Vagina (tissue), 2 donors: ENCODE measurements at regions of chr5 and their contacts with region 1.

Region 1: DNA sequence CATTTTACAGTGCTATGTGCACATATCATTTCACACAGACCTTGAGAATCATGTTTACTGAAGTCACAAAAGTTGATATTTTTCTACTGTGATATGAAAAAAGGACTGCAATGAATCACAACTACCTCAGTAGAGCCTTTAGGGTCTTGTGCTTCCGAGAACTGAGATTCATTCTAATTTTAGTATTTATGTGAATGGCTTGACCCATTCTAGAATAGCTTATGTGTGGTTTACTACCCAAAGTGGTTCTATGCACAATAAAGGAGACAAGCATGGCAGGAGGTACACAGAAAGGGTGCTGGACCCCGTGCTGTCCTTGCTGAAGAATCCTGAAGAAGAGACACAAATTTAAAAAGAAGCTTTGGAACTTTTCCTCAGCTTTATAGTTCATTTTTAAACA is 28.2 kb downstream of the MEF2C start:
- DNase-seq: no peak
- H3K4me3 ChIP-seq: no peak overlapping the region
- H3K27ac ChIP-seq: no peak overlapping the region
- H3K4me1 ChIP-seq: no peaks in the 10 kb centered on the region
- H3K27me3 ChIP-seq: no peaks in the 10 kb centered on the region
- CTCF ChIP-seq: no peak
- POLR2A ChIP-seq: no peak

Region 2: GRCh38 chr5:88438011-88438410 is 416.8 kb before region 1 on chr5:
- intact Hi-C with region 1: no loop called
- DNase-seq: no peak
- H3K4me3 ChIP-seq: no peak overlapping the region
- H3K27ac ChIP-seq: no peak overlapping the region
- H3K4me1 ChIP-seq: no peaks in the 10 kb centered on the region
- H3K27me3 ChIP-seq: no peaks in the 10 kb centered on the region
- CTCF ChIP-seq: no peak
- POLR2A ChIP-seq: no peak

Region 3: DNA sequence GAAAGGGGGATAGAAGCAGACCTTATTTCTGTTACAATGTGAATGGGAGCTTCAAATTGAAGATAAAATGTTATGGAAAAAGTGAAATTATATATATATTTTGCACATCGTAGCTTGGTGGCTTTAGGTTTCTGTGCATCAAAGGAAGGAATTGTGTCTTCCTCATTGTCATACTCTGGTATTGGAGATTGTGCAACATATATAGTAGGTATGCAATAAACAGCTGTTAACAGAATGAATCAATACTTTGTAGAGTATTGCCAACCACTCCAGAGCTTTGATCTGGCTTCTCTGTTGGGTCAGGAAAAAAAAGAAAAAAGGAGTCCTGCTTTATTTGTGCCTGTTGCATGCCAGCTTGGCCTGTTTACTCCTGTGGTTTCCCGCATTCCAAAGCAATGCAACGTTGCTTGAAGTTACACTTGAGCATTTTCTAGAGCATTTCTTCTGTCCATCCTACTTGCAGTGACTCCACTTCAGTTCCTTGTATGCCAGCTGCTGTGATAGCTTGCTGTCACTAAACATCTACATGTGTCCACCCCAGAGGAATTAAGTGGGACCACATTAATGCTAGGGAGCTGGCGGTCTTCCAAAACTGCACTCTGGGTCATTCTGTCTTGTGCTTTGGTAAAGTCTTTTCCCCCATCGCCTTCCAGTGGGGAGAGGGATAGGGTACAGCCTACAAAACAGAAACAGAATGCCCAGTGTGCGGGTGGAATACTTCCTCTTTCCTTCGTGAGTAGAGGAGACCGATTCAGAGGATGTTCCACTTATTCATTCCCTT is 90.2 kb after region 1 on chr5:
- intact Hi-C with region 1: loop called (anchors 5 kb)
- DNase-seq: no peak
- H3K4me3 ChIP-seq: no peak overlapping the region
- H3K27ac ChIP-seq: no peak overlapping the region
- H3K4me1 ChIP-seq: peaks cover 4% of the 10 kb centered on the region
- H3K27me3 ChIP-seq: no peaks in the 10 kb centered on the region
- CTCF ChIP-seq: no peak
- POLR2A ChIP-seq: no peak

Region 4: DNA sequence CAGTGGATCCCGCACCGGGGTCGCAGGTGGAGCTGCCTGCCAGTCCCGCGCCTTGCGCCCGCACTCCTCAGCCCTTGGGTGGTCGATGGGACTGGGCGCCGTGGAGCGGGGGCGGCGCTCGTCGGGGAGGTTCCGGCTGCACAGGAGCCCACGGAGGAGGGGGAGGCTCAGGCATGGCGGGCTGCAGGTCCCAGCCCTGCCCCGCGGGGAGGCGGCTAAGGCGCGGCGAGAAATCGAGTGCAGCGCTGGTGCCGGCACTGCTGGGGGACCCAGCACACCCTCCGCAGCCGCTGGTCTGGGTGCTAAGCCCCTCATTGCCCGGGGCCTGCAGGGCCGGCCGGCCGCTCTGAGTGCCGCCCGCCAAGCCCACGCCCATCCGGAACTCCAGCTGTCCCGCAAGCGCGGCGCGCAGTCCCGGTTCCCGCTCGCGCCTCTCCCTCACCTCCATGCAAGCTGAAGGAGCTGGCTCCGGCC is 148.8 kb after region 1 on chr5:
- intact Hi-C with region 1: no loop called
- DNase-seq: no peak
- H3K4me3 ChIP-seq: no peak overlapping the region
- H3K27ac ChIP-seq: no peak overlapping the region
- H3K4me1 ChIP-seq: no peaks in the 10 kb centered on the region
- H3K27me3 ChIP-seq: no peaks in the 10 kb centered on the region
- CTCF ChIP-seq: no peak
- POLR2A ChIP-seq: no peak